Activated CD4-positive, alpha-beta T cell treated with anti-CD3 and anti-CD28 coated beads, Interleukin-2, amount 10 ng/mL, durations not matched to agents 24 days and 14 days (primary cell): ENCODE measurements at regions of chr11 and their contacts with region 1.

Region 1: GRCh38 chr11:12235947-12236743 is 125.8 kb downstream of the MICAL2 start:
- DNase-seq: peak; percentile 91
- H3K4me3 Mint-ChIP-seq: peak overlapping the region; percentile 77
- H3K27ac Mint-ChIP-seq: peak overlapping the region; percentile 98
- H3K4me1 Mint-ChIP-seq: peaks cover 54% of the 10 kb centered on the region
- H3K27me3 Mint-ChIP-seq: no peaks in the 10 kb centered on the region

Region 2: GRCh38 chr11:12087075-12088004 is 148.8 kb before region 1 on chr11:
- intact Hi-C with region 1: loop called (anchors 1 kb)
- DNase-seq: peak; percentile 88
- H3K4me3 Mint-ChIP-seq: peak overlapping the region; percentile 40
- H3K27ac Mint-ChIP-seq: peak overlapping the region; percentile 75
- H3K4me1 Mint-ChIP-seq: peaks cover 61% of the 10 kb centered on the region
- H3K27me3 Mint-ChIP-seq: no peaks in the 10 kb centered on the region

Region 3: DNA sequence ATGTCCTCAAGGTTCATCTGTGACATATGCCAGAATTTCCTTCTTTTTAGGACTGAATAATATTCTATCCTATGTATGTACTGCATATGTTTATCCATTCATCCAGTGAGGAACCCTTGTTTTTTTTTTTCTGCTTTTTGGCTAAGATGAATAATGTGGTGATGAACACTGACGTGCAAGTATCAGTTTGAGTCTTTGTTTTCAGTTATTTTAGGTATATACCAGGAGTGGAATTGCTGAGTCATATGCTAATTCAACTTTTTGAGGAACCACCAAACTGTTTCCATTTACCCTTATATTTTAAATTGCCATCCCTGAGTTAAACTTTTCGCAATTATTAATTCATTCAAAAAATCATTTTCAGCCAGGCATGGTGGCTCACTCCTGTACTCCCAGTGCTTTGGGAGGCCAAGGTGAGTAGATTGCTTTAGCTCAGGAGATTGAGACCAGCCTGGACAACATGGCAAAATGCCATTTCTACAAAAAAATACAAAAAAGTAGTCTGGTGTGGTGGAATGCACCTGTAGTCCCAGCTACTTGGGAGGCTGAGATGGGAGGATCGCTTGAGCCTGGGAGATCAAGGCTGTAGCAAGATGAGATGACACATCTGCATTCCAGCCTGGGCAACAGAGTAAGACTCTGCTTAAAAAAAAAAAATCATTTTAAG is 61.5 kb before region 1 on chr11:
- intact Hi-C with region 1: loop called (anchors 1 kb)
- DNase-seq: peak; percentile 74
- H3K4me3 Mint-ChIP-seq: peak overlapping the region; percentile 78
- H3K27ac Mint-ChIP-seq: peak overlapping the region; percentile 94
- H3K4me1 Mint-ChIP-seq: peaks cover 71% of the 10 kb centered on the region
- H3K27me3 Mint-ChIP-seq: no peaks in the 10 kb centered on the region

Region 4: DNA sequence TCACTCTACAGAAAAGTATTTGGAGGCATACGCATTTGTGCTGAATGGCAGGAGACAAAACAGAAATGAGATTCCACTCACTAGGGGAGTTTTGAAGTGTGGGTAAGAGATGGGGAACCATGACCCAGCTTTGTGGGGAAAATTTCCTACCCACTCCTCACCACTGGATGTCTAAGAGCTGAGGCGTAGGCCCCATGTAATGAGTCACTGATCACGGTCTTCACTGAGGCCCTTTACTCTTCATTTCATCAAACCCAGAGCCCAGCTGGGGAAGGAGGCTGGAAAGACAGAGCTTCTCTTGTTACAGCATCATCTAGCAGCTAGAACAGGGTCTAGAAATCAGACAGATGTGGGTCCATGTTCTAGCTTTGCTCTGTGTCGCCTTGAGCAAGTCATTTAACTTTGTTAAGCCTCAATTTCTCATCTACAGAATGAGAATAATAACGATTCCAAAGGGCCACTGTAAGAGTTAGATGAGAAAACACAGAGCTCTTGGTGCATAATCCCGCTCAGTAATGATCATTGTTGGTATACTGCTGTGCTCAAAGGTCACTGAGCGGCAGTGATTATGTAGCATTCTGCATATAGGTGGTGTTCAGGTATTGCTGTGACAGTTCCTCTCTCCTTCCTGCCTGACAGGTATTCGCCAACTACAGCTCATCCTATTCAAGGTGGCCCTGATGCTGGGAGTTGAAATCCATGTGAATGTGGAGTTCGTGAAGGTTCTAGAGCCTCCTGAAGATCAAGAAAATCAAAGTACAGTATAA is 28.6 kb before region 1 on chr11:
- intact Hi-C with region 1: loop called (anchors 1 kb)
- DNase-seq: peak; percentile 68
- H3K4me3 Mint-ChIP-seq: peak overlapping the region; percentile 68
- H3K27ac Mint-ChIP-seq: peak overlapping the region; percentile 95
- H3K4me1 Mint-ChIP-seq: peaks cover 68% of the 10 kb centered on the region
- H3K27me3 Mint-ChIP-seq: no peaks in the 10 kb centered on the region

Region 5: GRCh38 chr11:12281571-12282478 is 45.7 kb after region 1 on chr11:
- intact Hi-C with region 1: loop called (anchors 2 kb)
- DNase-seq: peak; percentile 93
- H3K4me3 Mint-ChIP-seq: no peak overlapping the region
- H3K27ac Mint-ChIP-seq: peak overlapping the region; percentile 71
- H3K4me1 Mint-ChIP-seq: peaks cover 18% of the 10 kb centered on the region
- H3K27me3 Mint-ChIP-seq: no peaks in the 10 kb centered on the region